GM13976 (cell line): ENCODE measurements at regions of chr13 and their contacts with region 1.

Region 1: GRCh38 chr13:62119739-62120700 is 704.4 kb upstream of the PCDH20 start:
- DNase-seq: peak; percentile 32
- CTCF ChIP-seq: no peak

Region 2: DNA sequence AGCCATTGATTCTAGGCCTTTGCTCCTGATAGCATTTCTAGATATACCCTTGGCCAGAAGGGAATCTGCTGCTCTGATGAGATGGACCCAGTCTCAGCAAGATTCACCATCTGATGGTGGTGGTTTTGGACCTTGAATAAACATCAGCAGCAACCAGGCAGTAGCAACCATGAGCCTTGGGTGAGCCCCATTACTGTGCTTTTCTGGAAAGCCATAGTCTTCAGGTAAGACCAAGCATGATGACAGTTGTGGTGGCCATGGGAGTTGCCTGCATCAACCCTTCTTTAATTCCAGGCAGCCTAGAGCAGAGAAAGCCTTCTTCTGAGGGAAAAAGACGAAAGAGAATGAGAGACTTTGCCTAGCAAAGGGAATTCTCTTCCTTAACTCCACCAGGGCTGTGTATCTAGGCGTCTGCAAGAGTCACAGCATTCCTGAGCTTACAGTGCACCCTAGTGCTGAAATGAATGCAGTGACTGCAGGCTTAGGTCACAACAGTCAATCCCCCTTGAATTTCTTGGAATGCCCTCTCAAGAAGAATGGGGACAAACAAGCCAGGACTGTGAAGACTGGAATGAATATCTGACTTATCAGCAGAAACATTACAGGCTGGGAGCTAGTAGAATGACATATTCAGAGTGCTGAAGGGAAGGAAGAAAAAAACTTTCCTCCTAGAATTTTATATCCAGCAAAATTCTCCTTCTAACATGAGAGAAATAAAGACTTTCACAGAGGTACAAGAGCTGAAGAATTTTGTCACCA is 238.0 kb after region 1 on chr13:
- in situ Hi-C with region 1: loop called (anchors 25 kb)
- DNase-seq: peak; percentile 10
- CTCF ChIP-seq: peak; percentile 49